B cell (primary cell): ENCODE measurements at regions of chr3 and their contacts with region 1.

Region 1: GRCh38 chr3:138915503-138916498 is 31.1 kb downstream of the FOXL2 start:
- DNase-seq: peak; percentile 88
- ATAC-seq: peak; percentile 84
- H3K4me3 ChIP-seq: peak overlapping the region; percentile 55 to 81 (median 70)
- H3K4me3 Mint-ChIP-seq: peak overlapping the region; percentile 92
- H3K27ac ChIP-seq: peak overlapping the region; percentile 40 to 54
- H3K27ac Mint-ChIP-seq: peak overlapping the region; percentile 83
- H3K4me1 ChIP-seq: peaks cover 3 to 18% of the 10 kb centered on the region in 2 donors
- H3K4me1 Mint-ChIP-seq: peaks cover 13% of the 10 kb centered on the region
- H3K27me3 ChIP-seq: peaks cover 0 to 5% (median 1%) of the 10 kb centered on the region in 4 experiments
- H3K27me3 Mint-ChIP-seq: peaks cover 10% of the 10 kb centered on the region
- CTCF ChIP-seq: peak; percentile 89

Region 2: GRCh38 chr3:138186803-138187295 is 729.0 kb before region 1 on chr3:
- CTCF ChIA-PET with region 1: interaction called, 6 read pairs
- POLR2A ChIA-PET with region 1: no interaction called
- intact Hi-C with region 1: loop called (anchors 2 kb)
- DNase-seq: peak; percentile 94
- ATAC-seq: peak; percentile 94
- H3K4me3 ChIP-seq: peak overlapping the region; percentile 79 to 98 (median 94)
- H3K4me3 Mint-ChIP-seq: peak overlapping the region; percentile 97
- H3K27ac ChIP-seq: peak overlapping the region; percentile 85 to 89
- H3K27ac Mint-ChIP-seq: peak overlapping the region; percentile 97
- H3K4me1 ChIP-seq: peaks cover 8 to 17% of the 10 kb centered on the region in 2 donors
- H3K4me1 Mint-ChIP-seq: peaks cover 34% of the 10 kb centered on the region
- H3K27me3 ChIP-seq: peaks cover 0 to 19% (median 7%) of the 10 kb centered on the region in 4 experiments
- H3K27me3 Mint-ChIP-seq: peaks cover 15% of the 10 kb centered on the region
- CTCF ChIP-seq: no peak

Region 3: DNA sequence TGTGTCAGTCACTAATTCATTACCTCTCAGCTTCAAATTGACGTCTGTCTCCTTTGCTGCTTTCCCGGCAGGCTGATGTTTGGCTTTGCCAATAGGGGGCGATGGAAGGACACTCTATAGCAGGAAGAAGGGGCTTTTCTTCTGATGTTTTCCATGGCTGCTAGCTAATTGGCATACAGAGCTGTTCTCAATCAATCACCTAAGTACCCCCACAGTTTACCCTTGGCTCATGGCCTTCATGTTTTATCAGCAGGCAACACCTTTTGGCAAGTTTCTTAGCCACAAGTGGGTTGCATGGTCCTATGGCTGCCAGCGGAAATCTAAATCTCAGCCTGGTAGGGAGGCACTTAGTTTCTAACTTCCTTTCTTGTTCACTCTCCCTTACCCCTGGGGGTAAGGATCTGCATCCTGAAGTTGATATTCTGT is 436.4 kb before region 1 on chr3:
- CTCF ChIA-PET with region 1: interaction called, 19 read pairs
- POLR2A ChIA-PET with region 1: no interaction called
- intact Hi-C with region 1: no loop called
- DNase-seq: peak; percentile 31
- ATAC-seq: no peak
- H3K4me3 ChIP-seq: no peak overlapping the region
- H3K4me3 Mint-ChIP-seq: no peak overlapping the region
- H3K27ac ChIP-seq: no peak overlapping the region
- H3K27ac Mint-ChIP-seq: no peak overlapping the region
- H3K4me1 ChIP-seq: no peaks in the 10 kb centered on the region
- H3K4me1 Mint-ChIP-seq: no peaks in the 10 kb centered on the region
- H3K27me3 ChIP-seq: peaks cover 0 to 4% (median 0%) of the 10 kb centered on the region in 4 experiments
- H3K27me3 Mint-ChIP-seq: peaks cover 25% of the 10 kb centered on the region
- CTCF ChIP-seq: peak; percentile 51

Region 4: DNA sequence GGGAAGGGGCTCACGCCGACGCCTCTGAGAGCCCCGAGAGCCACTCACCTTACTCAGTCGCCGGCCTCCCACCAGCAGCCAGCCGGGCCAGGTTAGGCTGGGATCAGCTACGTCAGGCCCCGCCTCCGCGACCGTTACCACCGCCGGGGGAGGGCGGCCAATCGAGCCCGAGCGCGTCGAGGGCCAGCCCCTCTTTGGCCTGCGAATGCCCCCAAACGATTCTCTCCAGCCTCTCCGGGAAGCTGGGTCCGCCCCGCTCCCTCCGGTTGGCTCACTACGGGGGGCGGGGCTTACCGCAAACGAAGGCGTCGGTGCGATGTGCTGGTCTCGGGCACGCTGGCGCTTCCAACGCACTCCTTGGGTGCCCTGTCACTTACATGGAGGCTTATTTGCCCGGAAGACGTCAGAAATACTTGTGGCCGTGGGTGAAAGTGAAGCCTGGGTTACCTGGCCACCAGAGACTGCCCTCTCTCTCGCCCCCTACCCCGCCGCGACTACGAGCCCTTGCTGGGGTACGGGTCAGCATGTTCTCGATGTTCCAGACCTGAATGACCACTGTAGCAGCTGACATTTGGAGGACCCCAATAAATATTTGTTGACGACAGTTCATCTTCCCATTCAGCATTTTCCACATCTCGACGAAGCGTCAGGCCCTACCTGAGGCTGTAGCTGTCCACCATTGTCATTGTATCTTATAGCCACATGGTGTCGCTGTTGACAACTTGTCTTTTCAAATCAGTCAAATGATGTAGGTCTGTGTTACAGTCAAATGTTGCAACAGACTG is 321.5 kb before region 1 on chr3 and contains the start of gene CEP70:
- CTCF ChIA-PET with region 1: interaction called, 461 read pairs
- POLR2A ChIA-PET with region 1: interaction called, 18 read pairs
- intact Hi-C with region 1: loop called (anchors 1 kb)
- DNase-seq: peak; percentile 93
- ATAC-seq: peak; percentile 92
- H3K4me3 ChIP-seq: peak within 1 kb of the TSS; percentile 69 to 93 (median 80)
- H3K4me3 Mint-ChIP-seq: peak within 1 kb of the TSS; percentile 91
- H3K27ac ChIP-seq: peak within 1 kb of the TSS; percentile 71 to 74
- H3K27ac Mint-ChIP-seq: peak within 1 kb of the TSS; percentile 85
- H3K4me1 ChIP-seq: peaks cover 5 to 10% of the 10 kb centered on the region in 2 donors
- H3K4me1 Mint-ChIP-seq: peaks cover 7% of the 10 kb centered on the region
- H3K27me3 ChIP-seq: peaks cover 0 to 3% (median 0%) of the 10 kb centered on the region in 4 experiments
- H3K27me3 Mint-ChIP-seq: no peaks in the 10 kb centered on the region
- CTCF ChIP-seq: peak; percentile 92
- total RNA-seq, gene CEP70: 9.6 and 11.6 TPM in 2 replicates

Region 5: DNA sequence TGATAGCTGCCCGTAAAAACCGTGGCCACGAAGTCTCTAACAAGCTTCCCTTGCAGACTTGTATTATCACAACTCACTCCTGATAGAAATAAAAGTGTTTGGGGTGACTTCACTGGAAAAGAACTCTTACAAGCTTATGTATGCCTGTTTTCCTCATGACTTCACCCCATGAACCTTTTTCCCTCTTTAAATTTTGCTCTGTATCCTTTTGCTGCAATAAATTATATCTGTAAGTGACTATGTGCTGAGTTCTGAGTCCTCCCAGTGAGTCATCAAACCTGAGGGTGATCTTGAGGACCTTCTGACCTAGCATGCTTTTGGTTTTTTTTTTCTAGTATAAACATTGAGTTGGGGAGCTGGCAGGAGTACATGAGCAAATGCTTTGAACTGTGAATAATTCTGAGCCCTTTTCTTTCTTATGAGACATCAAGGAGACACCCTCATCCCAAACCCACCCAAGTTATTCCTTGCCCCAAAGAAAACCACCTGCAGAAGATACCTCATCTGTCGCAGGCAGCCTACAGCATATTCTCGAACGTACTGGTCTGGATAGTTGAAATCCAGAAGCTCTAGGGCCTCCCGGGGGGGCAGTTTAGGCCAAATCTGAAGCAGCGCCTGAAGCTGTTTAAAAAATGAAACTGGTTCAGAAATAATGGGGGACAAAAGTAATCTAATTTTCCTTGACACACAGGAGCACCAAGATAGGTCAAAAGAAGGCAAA is 221.4 kb before region 1 on chr3:
- CTCF ChIA-PET with region 1: interaction called, 82 read pairs
- POLR2A ChIA-PET with region 1: no interaction called
- intact Hi-C with region 1: loop called (anchors 1 kb)
- DNase-seq: no peak
- ATAC-seq: no peak
- H3K4me3 ChIP-seq: no peak overlapping the region
- H3K4me3 Mint-ChIP-seq: no peak overlapping the region
- H3K27ac ChIP-seq: no peak overlapping the region
- H3K27ac Mint-ChIP-seq: no peak overlapping the region
- H3K4me1 ChIP-seq: no peaks in the 10 kb centered on the region
- H3K4me1 Mint-ChIP-seq: no peaks in the 10 kb centered on the region
- H3K27me3 ChIP-seq: no peaks in the 10 kb centered on the region
- H3K27me3 Mint-ChIP-seq: no peaks in the 10 kb centered on the region
- CTCF ChIP-seq: no peak

Region 6: DNA sequence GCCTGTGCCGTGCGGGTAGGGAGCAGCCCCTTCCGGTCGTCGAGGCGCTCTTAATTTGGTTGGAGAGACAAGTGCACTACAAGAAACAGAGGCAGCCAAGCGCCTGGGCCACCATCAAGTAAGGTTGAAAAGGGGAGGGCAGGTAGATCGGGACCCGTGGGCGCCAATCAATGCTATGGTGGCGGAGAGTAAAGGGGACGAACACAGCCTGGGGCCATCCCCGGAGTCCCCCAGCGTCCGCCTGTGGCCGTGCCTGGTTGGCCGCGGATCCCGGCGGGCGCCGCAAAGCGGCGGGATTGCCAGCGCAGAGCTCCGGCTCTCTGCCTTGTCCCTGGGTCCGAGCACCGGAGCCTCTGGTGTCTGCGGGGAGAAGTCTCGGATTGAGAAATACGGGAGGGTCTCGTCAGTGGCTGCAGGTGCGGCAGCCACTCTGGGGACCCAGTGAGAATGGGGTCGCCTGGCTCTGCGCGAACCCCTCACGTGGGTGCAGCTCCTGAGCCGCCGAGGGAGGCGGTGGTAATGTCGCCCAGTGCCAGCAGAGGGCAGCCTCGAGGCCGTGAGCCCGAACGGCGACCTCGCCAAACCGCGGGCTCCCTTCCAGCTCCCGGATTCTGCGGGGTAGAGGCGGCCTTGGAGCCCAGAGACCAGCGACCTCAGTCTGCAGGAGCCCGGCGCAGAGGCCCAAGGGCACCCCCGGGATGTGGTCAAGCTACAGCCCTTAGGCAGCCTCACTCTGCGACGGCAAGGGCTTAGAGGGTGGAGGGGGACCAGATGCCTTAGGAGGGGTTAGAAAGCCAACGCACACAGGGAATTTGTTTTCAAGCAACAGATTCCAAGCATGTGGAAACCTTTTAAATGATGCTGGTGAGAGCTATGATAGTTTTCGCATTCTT is 20.3 kb after region 1 on chr3:
- CTCF ChIA-PET with region 1: interaction called, 157 read pairs
- POLR2A ChIA-PET with region 1: no interaction called
- intact Hi-C with region 1: no loop called
- DNase-seq: peak; percentile 77
- ATAC-seq: peak; percentile 87
- H3K4me3 ChIP-seq: peak overlapping the region in 4 of 5 experiments; percentile 10 to 55 (median 38)
- H3K4me3 Mint-ChIP-seq: peak overlapping the region; percentile 80
- H3K27ac ChIP-seq: no peak overlapping the region
- H3K27ac Mint-ChIP-seq: no peak overlapping the region
- H3K4me1 ChIP-seq: peaks cover 46 to 47% of the 10 kb centered on the region in 2 donors
- H3K4me1 Mint-ChIP-seq: peaks cover 32% of the 10 kb centered on the region
- H3K27me3 ChIP-seq: peaks cover 0 to 80% (median 58%) of the 10 kb centered on the region in 4 experiments
- H3K27me3 Mint-ChIP-seq: peaks cover 66% of the 10 kb centered on the region
- CTCF ChIP-seq: peak; percentile 97

Region 7: GRCh38 chr3:139509631-139510030 is 593.8 kb after region 1 on chr3:
- CTCF ChIA-PET with region 1: no interaction called
- POLR2A ChIA-PET with region 1: no interaction called
- intact Hi-C with region 1: no loop called
- DNase-seq: no peak
- ATAC-seq: no peak
- H3K4me3 ChIP-seq: no peak overlapping the region
- H3K4me3 Mint-ChIP-seq: no peak overlapping the region
- H3K27ac ChIP-seq: no peak overlapping the region
- H3K27ac Mint-ChIP-seq: no peak overlapping the region
- H3K4me1 ChIP-seq: no peaks in the 10 kb centered on the region
- H3K4me1 Mint-ChIP-seq: no peaks in the 10 kb centered on the region
- H3K27me3 ChIP-seq: no peaks in the 10 kb centered on the region
- H3K27me3 Mint-ChIP-seq: no peaks in the 10 kb centered on the region
- CTCF ChIP-seq: no peak